Activated CD4-positive, alpha-beta memory T cell treated with anti-CD3 and anti-CD28 coated beads for 36 hours (primary cell): ENCODE measurements at regions of chr1 and their contacts with region 1.

Region 1: DNA sequence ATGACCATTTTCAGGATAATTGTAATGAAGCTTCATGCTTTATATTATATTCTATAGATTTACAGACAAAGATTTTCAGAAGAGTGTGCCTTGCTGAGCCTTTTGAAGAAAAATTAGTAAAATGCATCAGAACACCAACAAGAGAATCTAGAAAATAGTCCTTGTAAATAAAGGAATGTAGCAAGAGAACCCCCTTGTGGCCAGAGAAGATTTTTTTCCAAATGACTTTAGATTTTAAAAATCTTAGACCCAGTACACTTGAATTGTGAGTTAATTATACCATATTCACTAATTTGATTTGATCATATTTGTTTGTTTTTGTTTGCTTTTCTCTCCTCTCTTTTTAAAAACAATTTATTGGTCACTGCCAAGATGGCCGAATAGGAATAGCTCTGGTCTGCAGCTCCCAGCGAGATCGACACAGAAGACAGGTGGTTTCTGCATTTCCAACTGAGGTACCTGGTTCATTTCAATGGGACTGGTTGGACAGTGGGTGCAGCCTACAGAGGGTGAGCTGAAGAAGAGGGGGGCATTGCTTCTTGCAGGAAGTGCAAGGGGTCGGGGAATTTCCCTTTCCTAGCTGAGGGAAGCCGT is 12.8 kb upstream of the IFI44L start:
- DNase-seq: no peak
- H3K4me3 Mint-ChIP-seq: no peak overlapping the region
- H3K27ac Mint-ChIP-seq: no peak overlapping the region
- H3K4me1 Mint-ChIP-seq: no peaks in the 10 kb centered on the region
- H3K27me3 Mint-ChIP-seq: peaks cover 7% of the 10 kb centered on the region

Region 2: GRCh38 chr1:78126506-78126905 is 480.9 kb before region 1 on chr1:
- CTCF ChIA-PET with region 1: interaction called, 9 read pairs
- POLR2A ChIA-PET with region 1: no interaction called
- intact Hi-C with region 1: loop called (anchors 2 kb)
- DNase-seq: no peak
- H3K4me3 Mint-ChIP-seq: no peak overlapping the region
- H3K27ac Mint-ChIP-seq: no peak overlapping the region
- H3K4me1 Mint-ChIP-seq: no peaks in the 10 kb centered on the region
- H3K27me3 Mint-ChIP-seq: no peaks in the 10 kb centered on the region

Region 3: DNA sequence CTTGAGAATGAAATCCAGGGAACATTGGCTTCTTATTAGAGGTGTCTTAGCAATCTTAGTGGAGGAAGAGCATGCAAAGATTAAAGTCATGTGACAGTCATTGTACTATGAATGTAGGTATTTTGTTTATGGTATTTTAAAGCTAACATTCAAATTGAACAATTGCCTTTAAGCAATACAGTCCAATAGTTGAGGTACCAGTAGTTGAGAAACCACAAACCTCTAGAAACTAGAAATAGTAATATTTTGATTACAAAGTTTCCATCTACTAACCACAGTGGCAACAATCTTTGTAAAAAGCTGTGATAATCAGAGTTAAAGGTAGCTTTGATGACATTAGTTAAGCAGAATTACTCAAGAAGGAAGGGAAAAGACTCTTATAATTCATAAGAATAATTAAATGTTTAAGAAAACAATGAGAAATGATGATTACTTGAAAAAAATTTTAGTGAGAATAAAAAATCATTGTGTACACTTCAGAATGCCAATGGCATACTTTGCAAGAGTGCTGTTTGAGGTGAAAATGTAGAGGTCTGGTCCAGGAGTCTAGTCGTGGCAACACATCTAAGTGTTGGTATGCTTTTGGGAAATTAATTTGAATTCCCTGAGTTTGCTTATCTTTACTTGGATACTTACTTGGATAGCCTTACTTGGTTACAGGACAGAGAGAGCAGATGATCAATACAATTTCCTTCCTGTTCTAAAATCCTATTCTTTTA is 221.5 kb before region 1 on chr1:
- CTCF ChIA-PET with region 1: no interaction called
- POLR2A ChIA-PET with region 1: no interaction called
- intact Hi-C with region 1: no loop called
- DNase-seq: no peak
- H3K4me3 Mint-ChIP-seq: no peak overlapping the region
- H3K27ac Mint-ChIP-seq: no peak overlapping the region
- H3K4me1 Mint-ChIP-seq: no peaks in the 10 kb centered on the region
- H3K27me3 Mint-ChIP-seq: no peaks in the 10 kb centered on the region

Region 4: DNA sequence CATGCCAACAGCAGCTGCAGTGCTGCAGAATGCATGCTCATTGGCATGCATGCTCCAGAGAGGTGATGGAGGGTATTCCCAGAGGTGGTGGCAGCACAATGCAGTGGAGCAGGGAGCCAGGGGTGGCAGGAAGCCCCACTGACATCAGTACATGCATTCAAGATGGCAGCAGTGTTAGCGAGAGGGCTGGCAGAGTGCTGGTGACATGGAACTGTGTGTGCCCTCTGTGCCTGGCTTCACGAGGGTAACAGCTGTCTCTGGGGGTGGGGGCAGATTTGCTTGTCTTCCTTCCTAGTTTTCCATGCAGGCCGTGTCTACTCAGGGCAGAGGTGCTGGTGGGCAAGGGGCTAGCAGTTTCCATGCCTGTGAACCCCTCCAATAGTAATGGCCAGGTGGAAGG is 94.1 kb after region 1 on chr1:
- CTCF ChIA-PET with region 1: no interaction called
- POLR2A ChIA-PET with region 1: no interaction called
- intact Hi-C with region 1: no loop called
- DNase-seq: no peak
- H3K4me3 Mint-ChIP-seq: no peak overlapping the region
- H3K27ac Mint-ChIP-seq: no peak overlapping the region
- H3K4me1 Mint-ChIP-seq: no peaks in the 10 kb centered on the region
- H3K27me3 Mint-ChIP-seq: peaks cover 13% of the 10 kb centered on the region